ENCODE measurements at regions of chr16 and their contacts with region 1.

Region 1: GRCh38 chr16:70289229-70290098 is at the start of gene AARS1:
- H3K4me3 ChIP-seq: peak within 1 kb of the TSS; percentile 84
- H3K27ac ChIP-seq: peak within 1 kb of the TSS; percentile 97
- H3K4me1 ChIP-seq: peaks cover 3% of the 10 kb centered on the region; the same call in 1 of the 2 replicates
- CTCF ChIP-seq: peak; percentile 21; the same call in 1 of the 2 replicates

Region 2: DNA sequence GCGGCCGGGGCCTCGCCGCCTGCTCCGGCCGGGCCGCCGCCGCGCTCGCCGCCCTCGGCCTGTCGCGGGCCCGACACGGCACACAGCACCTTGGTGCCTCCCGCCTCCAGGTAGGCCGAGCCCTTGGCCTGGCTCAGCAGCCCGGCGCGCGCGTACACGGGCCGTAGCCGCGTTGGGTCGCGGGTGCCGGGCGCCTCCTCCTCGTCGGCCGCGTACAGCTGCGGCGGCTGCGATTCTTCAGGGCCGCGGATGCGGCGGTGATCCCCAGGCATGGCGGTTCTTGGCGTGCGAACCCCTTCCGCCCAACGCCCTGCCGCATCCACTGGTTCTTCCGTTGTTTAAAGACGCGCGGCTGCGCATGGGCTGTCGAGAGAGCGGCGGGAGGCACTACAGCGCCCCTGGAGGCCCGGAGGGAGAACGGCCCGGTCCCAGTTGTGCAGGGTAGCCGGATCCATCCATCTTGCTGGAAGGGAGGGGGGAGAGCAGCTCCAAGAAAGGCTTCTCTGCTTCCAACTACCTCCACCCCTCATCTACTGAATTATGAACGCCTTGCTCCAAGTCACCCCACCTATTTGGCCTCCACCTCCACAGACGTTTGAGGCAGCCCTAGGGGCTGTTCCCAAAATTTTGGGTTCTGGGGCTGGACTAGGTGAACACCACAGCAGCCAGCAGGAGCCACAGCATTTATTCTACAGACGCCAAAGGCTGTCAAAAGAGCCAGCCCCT is 37.7 kb before region 1 on chr16 and contains the start of gene EXOSC6:
- CTCF ChIA-PET with region 1: interaction called, 13 read pairs
- POLR2A ChIA-PET with region 1: interaction called, 17 read pairs
- H3K4me3 ChIP-seq: peak within 1 kb of the TSS; percentile 58
- H3K27ac ChIP-seq: peak within 1 kb of the TSS; percentile 95
- H3K4me1 ChIP-seq: no peaks in the 10 kb centered on the region
- CTCF ChIP-seq: peak; percentile 98

Region 3: GRCh38 chr16:70324998-70325747 is 35.7 kb after region 1 on chr16:
- CTCF ChIA-PET with region 1: interaction called, 3 read pairs
- POLR2A ChIA-PET with region 1: interaction called, 10 read pairs
- H3K4me3 ChIP-seq: no peak overlapping the region
- H3K27ac ChIP-seq: no peak overlapping the region
- H3K4me1 ChIP-seq: no peaks in the 10 kb centered on the region
- CTCF ChIP-seq: no peak

Region 4: DNA sequence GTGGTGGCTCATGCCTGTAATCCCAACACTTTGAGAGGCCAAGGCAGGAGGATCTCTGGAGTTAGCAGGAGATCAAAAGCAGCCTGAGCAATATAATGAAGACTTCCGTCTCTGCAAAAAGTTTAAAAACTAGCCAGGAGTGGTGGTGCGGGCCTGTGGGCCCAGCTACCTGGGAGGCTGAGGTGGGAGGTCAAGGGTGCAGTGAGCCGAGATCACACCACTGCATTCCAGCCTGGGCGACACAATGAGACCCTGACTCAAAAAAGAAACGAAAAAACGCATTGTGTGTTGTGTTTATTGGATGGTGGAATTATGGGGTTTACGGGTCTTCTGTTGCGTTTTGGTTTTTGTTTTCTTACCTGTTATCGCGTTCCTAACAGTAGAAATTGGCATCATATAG is 56.4 kb after region 1 on chr16:
- CTCF ChIA-PET with region 1: no interaction called
- POLR2A ChIA-PET with region 1: interaction called, 22 read pairs
- H3K4me3 ChIP-seq: peak overlapping the region; percentile 92
- H3K27ac ChIP-seq: peak overlapping the region; percentile 78; the same call in 1 of the 2 replicates
- H3K4me1 ChIP-seq: peaks cover 3% of the 10 kb centered on the region; the same call in 1 of the 2 replicates
- CTCF ChIP-seq: no peak

Region 5: GRCh38 chr16:70359552-70359951 is 70.1 kb after region 1 on chr16:
- CTCF ChIA-PET with region 1: no interaction called
- POLR2A ChIA-PET with region 1: interaction called, 13 read pairs
- H3K4me3 ChIP-seq: no peak overlapping the region
- H3K27ac ChIP-seq: no peak overlapping the region
- H3K4me1 ChIP-seq: no peaks in the 10 kb centered on the region
- CTCF ChIP-seq: no peak

Region 6: GRCh38 chr16:70370924-70371323 is 81.5 kb after region 1 on chr16:
- CTCF ChIA-PET with region 1: no interaction called
- POLR2A ChIA-PET with region 1: no interaction called
- H3K4me3 ChIP-seq: no peak overlapping the region
- H3K27ac ChIP-seq: no peak overlapping the region
- H3K4me1 ChIP-seq: no peaks in the 10 kb centered on the region
- CTCF ChIP-seq: no peak

Region 7: GRCh38 chr16:70402916-70403659 is 113.6 kb after region 1 on chr16:
- CTCF ChIA-PET with region 1: no interaction called
- POLR2A ChIA-PET with region 1: no interaction called
- H3K4me3 ChIP-seq: no peak overlapping the region
- H3K27ac ChIP-seq: no peak overlapping the region
- H3K4me1 ChIP-seq: no peaks in the 10 kb centered on the region
- CTCF ChIP-seq: no peak